Endothelial cell of umbilical vein (primary cell): ENCODE measurements at regions of chr2 and their contacts with region 1.

Region 1: GRCh38 chr2:169683054-169683424 is 11.2 kb downstream of the CFAP210 start:
- DNase-seq: no peak
- H3K4me3 ChIP-seq: no peak overlapping the region
- H3K27ac ChIP-seq: no peak overlapping the region
- H3K4me1 ChIP-seq: no peaks in the 10 kb centered on the region
- H3K27me3 ChIP-seq: peaks cover 6 to 11% of the 10 kb centered on the region in 2 experiments
- CTCF ChIP-seq: no peak
- POLR2A ChIP-seq: no peak

Region 2: GRCh38 chr2:169664978-169665930 is 17.8 kb before region 1 on chr2:
- CTCF ChIA-PET with region 1: no interaction called
- POLR2A ChIA-PET with region 1: no interaction called
- dilution Hi-C with region 1: no loop called
- intact Hi-C with region 1: loop called (anchors 2 kb)
- DNase-seq: peak; percentile 21
- H3K4me3 ChIP-seq: no peak overlapping the region
- H3K27ac ChIP-seq: no peak overlapping the region
- H3K4me1 ChIP-seq: no peaks in the 10 kb centered on the region
- H3K27me3 ChIP-seq: peaks cover 4 to 8% of the 10 kb centered on the region in 2 experiments
- CTCF ChIP-seq: no peak
- POLR2A ChIP-seq: no peak

Region 3: GRCh38 chr2:169702996-169703395 is 20.0 kb after region 1 on chr2:
- CTCF ChIA-PET with region 1: no interaction called
- POLR2A ChIA-PET with region 1: no interaction called
- dilution Hi-C with region 1: no loop called
- intact Hi-C with region 1: no loop called
- DNase-seq: no peak
- H3K4me3 ChIP-seq: no peak overlapping the region
- H3K27ac ChIP-seq: no peak overlapping the region
- H3K4me1 ChIP-seq: no peaks in the 10 kb centered on the region
- H3K27me3 ChIP-seq: no peaks in the 10 kb centered on the region
- CTCF ChIP-seq: no peak
- POLR2A ChIP-seq: no peak